Dendritic cell treated with granulocyte-macrophage colony-stimulating factor and Interleukin-4, amounts not matched to agents 40 ng/mL and 50 ng/mL, for 4 days (primary cell): ENCODE measurements at regions of chr11 and their contacts with region 1.

Region 1: GRCh38 chr11:14537134-14537599 is 17.0 kb upstream of the PSMA1 start:
- H3K4me3 Mint-ChIP-seq: peak overlapping the region; percentile 51
- H3K27ac Mint-ChIP-seq: peak overlapping the region; percentile 41
- H3K4me1 Mint-ChIP-seq: peaks cover 22% of the 10 kb centered on the region
- H3K27me3 Mint-ChIP-seq: no peaks in the 10 kb centered on the region

Region 2: DNA sequence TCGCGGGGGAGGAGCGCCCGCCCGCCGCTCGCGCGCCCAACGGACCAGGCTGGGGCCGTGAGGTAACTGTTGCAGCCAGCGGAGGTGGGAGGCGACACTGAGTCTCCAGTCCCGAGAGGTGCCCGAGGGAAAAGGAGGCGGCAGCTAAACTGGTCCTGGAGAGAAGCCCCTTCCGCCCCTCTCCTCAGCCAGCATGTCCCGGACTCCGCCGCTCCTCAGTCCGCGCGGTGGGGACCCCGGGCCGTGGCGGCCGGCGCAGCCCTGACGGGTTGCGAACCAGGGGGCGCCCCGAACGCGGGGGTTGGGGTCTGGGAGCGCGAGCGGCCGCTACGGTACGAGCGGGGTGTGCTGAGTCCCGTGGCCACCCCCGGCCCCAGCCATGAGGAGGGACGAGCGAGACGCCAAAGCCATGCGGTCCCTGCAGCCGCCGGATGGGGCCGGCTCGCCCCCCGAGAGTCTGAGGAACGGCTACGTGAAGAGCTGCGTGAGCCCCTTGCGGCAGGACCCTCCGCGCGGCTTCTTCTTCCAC is 106.6 kb after region 1 on chr11 and contains the start of gene PDE3B:
- intact Hi-C with region 1: loop called (anchors 2 kb)
- H3K4me3 Mint-ChIP-seq: peak within 1 kb of the TSS; percentile 87
- H3K27ac Mint-ChIP-seq: peak within 1 kb of the TSS; percentile 81
- H3K4me1 Mint-ChIP-seq: peaks cover 23% of the 10 kb centered on the region
- H3K27me3 Mint-ChIP-seq: peaks cover 1% of the 10 kb centered on the region

Region 3: GRCh38 chr11:14773755-14774154 is 236.6 kb after region 1 on chr11:
- intact Hi-C with region 1: loop called (anchors 10 kb)
- H3K4me3 Mint-ChIP-seq: no peak overlapping the region
- H3K27ac Mint-ChIP-seq: no peak overlapping the region
- H3K4me1 Mint-ChIP-seq: no peaks in the 10 kb centered on the region
- H3K27me3 Mint-ChIP-seq: no peaks in the 10 kb centered on the region